GM18951 (cell line): ENCODE measurements at regions of chr15 and their contacts with region 1.

Region 1: GRCh38 chr15:30770759-30771158 is 133.0 kb upstream of the FAN1 start:
- POLR2A ChIP-seq: no peak

Region 2: DNA sequence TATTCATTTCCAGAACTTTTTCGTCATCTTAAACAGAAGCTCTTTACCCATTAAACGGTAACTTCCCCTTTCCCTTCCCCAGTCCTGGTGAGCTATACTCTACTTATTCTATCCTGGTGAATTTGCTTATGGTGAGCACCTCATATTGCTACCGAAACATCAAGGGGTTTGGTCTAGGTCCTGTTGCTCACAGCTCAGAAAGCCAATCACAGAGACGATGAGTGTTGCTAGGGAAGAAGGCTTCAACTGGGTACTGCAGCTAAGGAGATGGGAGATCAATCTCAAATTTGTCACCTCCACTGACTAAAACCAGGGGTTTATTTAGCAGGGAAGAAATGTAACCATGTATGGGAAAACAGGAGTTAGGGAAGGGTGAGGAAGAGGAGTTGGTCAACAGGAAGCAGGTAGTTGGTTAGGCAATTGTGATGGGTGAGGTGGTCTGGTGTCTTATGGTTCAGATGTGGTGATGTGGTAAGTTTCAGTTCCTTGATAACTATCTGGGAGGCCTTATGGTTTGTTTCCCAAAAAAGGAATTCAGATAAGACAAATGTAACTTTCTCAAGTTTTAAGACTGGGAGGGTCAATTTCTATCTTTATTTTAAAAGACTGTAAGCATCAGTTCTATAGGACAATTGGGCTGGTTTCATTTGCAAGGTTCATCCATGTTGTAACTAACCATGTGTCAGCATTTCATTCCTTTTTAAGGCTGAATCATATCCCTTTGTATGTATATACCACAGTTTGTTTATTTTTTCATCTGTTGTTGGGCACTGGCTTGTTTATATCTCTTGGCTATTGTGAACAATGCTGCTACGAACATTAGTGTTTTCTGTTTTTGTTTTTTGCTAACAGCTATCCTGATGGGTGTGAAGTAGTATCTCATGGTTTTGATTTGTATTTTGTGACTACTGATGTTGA is 120.5 kb before region 1 on chr15:
- in situ Hi-C with region 1: loop called (anchors 25 kb)
- POLR2A ChIP-seq: no peak